HEK293T (cell line): ENCODE measurements at regions of chr1 and their contacts with region 1.

Region 1: DNA sequence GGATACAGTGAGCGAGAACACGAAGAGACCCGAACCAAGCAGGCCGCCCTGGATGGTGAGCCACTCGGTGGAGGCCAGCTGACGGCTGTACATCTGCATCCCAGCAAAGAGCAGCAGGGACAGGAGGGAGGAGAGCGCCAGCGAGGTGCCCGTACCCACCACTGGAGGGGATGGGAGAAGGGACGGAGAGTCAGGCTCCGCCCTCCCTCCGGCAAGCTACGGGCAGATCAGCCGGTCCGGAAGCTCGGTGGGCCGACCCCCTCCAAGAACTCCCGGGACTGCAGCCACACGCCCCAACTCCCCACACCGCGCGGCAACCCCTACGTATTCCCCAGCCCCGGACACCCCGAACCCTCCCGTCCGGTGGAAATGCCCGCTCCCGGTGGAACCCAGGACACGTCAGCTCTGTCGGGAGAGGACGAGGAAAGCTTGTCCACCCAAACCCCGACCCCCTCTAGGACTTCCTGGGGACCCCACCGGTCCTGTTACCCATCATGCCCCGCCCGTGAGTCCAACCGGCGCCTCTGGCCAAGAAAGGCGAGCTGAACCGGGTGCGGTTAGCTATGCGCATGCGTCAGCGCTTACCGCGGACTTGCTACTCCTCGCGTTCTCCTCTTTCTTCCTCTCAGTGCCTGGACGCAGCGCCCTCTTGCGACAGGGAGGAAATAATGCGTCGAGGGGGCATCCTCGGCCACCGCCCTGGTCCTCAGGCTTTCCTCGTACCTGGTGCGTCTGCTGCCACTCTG is at the start of gene KRTCAP2:
- DNase-seq: peak; percentile 99

Region 2: DNA sequence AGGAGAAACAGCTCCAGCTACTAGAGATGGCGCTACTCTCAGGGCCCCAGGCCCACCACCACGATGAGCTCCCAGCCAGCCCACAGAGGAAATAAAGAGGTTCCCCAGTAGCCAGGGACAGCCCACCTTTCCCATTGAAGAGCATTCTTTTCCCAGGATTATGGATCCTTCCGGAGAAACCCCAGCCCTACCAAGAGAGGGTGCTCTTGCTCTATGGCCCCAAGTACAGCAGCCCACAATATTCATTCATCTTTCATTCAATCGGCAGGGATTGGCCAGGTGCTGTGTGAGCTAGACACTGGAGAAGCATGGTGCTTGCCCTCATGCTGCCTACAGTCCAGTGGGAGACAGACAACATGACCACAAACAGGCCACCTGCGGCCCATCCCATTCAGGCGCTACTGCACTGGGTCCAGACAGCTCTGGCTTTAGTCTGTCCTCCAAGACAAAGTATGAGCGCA is 266.3 kb before region 1 on chr1:
- CTCF ChIA-PET with region 1: no interaction called
- POLR2A ChIA-PET with region 1: no interaction called
- DNase-seq: peak; percentile 14

Region 3: GRCh38 chr1:155050560-155051341 is 122.2 kb before region 1 on chr1 and contains the start of gene ADAM15:
- CTCF ChIA-PET with region 1: interaction called, 5 read pairs
- POLR2A ChIA-PET with region 1: interaction called, 11 read pairs
- DNase-seq: peak; percentile 98

Region 4: DNA sequence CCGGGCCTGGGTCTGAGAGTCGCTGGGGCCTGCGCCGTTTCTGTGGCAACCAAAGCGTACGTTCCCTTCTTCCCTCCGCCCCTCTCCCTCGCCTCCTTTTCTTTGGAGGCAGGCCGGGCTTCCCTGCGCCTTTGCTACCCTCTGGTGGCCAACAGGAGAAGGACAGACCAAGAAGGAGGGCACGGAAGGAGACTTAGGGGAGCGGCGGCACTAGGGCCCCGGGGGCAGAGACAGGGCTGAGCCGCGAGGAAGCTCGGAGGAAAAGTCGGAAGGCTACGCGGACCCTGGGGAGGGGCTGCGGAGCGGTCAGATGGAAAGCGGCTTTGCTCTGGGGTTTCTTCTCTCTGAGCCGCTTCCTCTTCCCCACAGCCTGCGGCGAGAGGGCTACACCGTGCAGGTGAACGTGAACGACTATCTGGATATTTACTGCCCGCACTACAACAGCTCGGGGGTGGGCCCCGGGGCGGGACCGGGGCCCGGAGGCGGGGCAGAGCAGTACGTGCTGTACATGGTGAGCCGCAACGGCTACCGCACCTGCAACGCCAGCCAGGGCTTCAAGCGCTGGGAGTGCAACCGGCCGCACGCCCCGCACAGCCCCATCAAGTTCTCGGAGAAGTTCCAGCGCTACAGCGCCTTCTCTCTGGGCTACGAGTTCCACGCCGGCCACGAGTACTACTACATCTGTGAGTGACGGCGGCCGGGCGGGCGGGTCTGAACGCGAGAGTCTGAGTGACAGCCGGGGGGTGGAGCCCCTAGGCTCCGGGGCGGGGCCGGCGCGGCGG is 88.0 kb before region 1 on chr1:
- CTCF ChIA-PET with region 1: interaction called, 89 read pairs
- POLR2A ChIA-PET with region 1: interaction called, 13 read pairs
- DNase-seq: peak; percentile 94

Region 5: DNA sequence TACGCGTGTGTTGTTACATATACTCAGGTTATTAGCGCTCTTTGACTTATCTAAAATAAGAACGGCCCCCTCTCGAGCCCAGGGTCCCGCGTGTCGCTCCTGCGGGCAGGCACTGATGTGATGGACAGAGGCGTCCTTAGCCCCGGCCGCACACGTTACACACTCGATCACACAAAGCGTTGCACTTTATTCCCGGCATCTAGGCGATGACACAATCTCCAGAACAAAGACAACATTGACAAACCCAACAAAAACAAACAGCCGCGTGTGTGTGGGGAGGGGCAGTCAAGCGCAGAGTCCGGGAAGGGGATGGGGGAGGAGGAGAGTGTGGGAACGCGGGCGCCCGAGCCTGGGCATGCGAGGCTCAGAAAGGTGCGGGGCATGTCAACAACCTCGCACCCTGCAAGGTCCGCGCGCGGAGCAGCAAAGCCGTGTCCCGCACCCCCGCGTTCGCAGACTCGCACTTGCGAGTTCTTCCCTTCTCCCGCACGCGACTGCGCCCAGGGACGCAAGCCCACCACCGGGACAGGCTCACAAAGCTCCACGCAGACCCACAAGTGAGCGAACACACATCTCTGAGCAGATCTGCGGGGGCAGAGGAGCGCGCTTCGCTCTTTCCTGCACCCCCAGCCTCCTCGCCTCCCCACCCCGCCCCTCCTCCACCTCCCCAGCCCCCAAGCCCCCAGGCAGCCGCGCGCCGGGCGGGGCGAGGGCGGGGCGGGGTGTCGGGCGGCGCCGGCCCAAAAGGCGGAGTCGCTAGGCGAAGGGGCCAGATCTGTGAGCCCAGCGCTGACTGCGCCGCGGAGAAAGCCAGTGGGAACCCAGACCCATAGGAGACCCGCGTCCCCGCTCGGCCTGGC is 45.6 kb before region 1 on chr1 and contains the start of gene EFNA1:
- CTCF ChIA-PET with region 1: interaction called, 10 read pairs
- POLR2A ChIA-PET with region 1: interaction called, 10 read pairs
- DNase-seq: peak; percentile 71

Region 6: DNA sequence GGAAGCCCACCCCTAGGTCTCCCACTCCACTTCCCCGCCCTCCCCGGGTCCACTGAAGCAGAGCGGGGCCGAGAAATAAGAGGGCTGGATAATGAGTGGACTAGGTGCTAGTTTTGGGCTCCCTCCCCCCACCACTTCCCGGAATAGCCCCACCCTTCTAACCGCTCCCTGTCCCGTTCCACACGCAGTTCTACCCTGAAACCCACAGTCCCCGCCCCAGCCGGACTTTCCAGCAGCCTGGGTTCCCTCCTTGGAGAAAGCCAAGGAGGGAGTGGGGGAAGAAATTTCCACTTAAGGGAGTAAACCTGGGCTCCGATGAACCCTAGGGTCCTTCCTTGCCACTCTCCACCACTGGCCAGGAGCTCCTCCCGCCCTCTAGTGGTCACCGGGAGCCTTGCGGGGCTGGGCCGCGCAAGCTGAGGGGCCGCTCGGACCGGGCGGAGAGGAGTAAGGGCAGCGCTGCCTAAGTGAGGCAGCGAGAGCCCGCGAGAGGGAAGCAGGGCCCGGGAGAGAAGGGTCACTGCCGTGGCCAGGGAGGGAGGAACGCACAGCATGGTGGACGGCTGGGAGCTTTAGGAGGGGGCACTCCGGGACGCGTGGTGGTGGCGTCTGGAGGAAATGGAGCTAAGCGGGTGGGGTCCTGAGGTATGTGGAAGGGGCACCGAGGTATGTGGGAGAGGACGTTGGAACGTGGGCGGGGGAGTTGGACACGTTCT is 20.5 kb after region 1 on chr1:
- CTCF ChIA-PET with region 1: interaction called, 26 read pairs
- POLR2A ChIA-PET with region 1: interaction called, 96 read pairs
- DNase-seq: peak; percentile 93

Region 7: GRCh38 chr1:155244368-155245162 is 71.7 kb after region 1 on chr1:
- CTCF ChIA-PET with region 1: interaction called, 4 read pairs
- POLR2A ChIA-PET with region 1: interaction called, 15 read pairs
- DNase-seq: peak; percentile 96